Left colon (tissue), 2 donors: ENCODE measurements at regions of chr11 and their contacts with region 1.

Region 1: DNA sequence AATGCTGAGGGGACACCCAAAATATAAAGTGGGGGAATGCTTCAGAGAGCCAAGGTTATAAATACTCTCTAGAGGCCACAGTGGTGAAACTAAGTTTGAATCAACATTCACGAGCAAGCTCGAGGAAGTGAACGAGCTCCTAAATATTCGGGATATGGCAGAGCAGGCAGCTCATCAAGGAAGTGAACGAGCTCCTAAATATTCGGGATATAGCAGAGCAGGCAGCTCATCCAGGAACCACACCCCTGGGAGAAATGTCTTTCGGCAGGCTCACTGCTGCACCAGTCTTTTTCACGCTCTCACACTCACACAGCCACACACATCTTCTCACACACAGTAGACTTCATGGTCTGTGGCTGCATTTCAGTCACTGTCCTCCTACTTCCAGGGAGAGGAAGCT is 787.5 kb downstream of the OPCML start:
- DNase-seq: no peak
- ATAC-seq: no peak

Region 2: DNA sequence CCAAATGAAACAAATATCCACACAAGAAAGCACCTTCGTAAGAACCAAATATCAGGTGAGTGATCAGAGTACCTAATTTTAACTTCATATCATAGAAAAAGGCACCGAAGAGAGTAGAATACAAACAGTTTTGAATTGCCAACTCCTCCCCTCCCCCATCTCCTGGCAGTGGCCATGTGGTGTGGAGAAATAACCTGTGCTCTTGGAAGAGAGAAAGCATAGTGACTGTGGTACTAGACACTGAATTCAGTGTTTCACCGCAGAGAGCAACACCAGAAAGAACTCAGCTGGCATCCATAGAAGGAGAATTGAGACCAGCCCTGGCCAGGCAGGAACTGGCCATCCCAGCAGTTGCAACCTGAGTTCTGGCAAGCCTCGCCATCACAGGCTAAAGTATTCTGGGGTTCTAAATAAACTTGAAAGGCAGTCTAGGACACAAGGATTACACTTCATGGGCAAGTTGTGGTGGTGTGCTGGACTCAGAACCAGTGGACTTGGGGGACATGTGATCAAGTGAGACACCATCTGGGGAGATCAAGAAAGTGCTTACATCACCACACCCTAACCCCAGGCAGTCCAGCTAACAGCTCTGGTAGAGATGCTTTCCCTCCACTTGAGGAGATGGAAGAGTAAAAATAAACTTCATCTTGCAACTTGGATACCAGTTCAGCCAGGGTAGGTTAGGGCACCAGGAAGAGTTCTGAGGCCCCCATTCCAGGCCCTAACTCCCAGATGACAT is 371.2 kb before region 1 on chr11:
- intact Hi-C with region 1: no loop called
- DNase-seq: no peak
- ATAC-seq: no peak

Region 3: DNA sequence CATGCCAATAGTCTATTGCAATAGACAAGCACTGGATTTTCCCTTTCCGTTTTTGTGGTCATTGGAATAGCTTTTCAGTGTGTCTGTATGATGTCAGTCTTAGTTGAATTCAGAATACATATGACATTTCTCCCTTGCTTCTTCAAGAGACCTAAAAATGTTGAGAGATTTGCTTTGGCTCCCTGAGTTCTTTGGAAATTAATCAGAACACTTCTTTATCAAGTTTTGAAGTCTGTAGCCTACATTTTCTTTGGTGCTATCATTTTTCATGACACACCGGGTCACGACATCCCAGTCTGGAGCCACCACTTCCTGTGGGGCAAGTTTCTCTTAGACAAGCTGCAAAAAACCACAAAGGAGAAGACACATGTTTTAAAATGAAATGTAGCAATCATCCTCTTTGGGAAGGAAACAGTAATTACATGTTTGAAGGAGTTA is 59.6 kb before region 1 on chr11:
- intact Hi-C with region 1: loop called in 1 of 2 experiments (anchors 10 kb)
- DNase-seq: no peak
- ATAC-seq: no peak